ENCODE measurements at regions of chr2 and their contacts with region 1.

Region 1: DNA sequence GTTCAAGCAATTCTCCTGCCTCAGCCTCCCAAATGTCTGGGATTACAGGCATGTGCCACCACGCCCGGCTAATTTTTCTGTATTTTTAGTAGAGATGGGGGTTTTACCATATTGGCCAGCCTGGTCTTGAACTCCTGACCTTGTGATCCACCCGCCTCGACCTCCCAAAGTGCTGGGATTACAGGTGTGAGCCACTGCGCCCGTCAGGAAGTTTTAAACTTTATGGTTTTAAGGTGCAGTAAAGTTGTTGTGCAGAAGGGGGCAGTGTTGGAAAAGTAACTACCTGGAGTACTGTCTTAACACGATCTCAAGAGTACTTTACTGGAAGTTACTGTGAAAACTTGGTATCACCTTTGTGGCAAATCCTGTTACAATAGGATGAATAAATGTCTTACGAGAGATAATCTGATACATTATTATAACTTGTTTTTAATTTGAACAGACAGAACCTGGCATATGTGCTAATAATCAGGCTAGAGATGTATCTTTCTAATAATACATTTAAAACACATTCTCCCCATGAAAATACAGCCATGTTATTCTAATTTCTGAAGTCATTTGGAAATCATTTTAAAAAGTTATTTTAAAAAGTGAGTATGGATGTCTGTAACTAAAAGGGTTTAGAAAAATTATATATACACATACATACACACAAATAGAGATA is 10.8 kb downstream of the SPDYA start:
- DNase-seq: peak; percentile 65
- ATAC-seq: peak; percentile 97
- H3K4me3 ChIP-seq: no peak overlapping the region
- H3K27ac ChIP-seq: no peak overlapping the region
- H3K4me1 ChIP-seq: no peaks in the 10 kb centered on the region
- H3K27me3 ChIP-seq: no peaks in the 10 kb centered on the region
- CTCF ChIP-seq: peak; percentile 67
- POLR2A ChIP-seq: no peak
- RAD21 ChIP-seq: peak; percentile 75

Region 2: DNA sequence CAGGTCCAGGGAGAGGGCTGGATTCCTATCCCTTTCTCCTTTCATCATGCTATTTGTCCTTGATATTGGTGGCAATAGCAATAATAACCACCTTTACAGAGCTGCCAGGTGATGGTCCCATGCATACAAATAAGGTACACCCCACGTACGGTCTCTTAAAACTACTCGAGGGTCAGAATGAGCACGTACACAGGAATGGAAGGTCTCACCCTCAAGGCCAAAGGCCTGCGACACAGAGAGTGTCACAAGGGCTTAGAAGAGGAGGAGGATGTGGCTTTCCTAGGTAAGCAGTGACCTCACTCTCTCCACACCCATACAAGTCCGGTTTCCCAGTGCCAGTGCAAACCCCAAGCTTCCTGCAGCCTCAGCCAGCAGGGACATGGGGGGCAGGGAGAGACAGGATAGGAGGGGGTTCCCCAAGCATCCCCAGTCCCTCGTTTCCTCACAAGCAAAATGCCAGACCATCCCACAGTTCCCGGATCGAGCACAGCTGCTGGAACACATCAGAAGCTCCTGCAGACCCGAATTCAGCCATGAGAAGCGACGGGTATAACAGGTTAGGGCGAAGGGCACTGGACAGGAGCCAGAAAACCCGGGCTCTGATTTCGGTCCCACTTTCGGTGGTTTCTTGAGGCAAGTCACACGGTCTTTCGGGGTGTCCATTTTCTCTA is 276.4 kb before region 1 on chr2:
- CTCF ChIA-PET with region 1: no interaction called
- POLR2A ChIA-PET with region 1: no interaction called
- dilution Hi-C with region 1: no loop called
- in situ Hi-C with region 1: no loop called
- intact Hi-C with region 1: no loop called
- DNase-seq: peak; percentile 15
- ATAC-seq: no peak
- H3K4me3 ChIP-seq: no peak overlapping the region
- H3K27ac ChIP-seq: no peak overlapping the region
- H3K4me1 ChIP-seq: no peaks in the 10 kb centered on the region
- H3K27me3 ChIP-seq: peaks cover 35% of the 10 kb centered on the region
- CTCF ChIP-seq: no peak
- POLR2A ChIP-seq: no peak
- RAD21 ChIP-seq: no peak

Region 3: DNA sequence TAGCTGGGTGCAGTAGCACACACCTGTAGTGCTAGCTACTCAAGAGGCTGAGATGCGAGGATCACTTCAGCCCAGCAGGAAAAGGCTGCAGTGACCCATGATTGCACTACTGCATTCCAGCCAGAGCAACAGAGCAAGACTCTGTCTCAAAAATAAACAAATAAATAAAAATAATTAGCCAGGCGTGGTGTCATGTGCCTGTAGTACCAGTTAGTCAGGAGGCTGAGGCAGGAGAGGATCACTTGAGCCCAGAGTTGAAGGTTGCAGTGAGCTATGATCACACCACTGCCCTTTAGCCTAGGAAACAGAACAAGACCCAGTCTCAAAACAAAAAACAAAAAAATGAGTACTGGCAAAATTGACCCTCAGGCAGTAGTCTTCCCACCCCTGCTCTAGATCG is 131.7 kb before region 1 on chr2:
- CTCF ChIA-PET with region 1: no interaction called
- POLR2A ChIA-PET with region 1: no interaction called
- dilution Hi-C with region 1: no loop called
- in situ Hi-C with region 1: no loop called
- intact Hi-C with region 1: no loop called
- DNase-seq: no peak
- ATAC-seq: no peak
- H3K4me3 ChIP-seq: no peak overlapping the region
- H3K27ac ChIP-seq: no peak overlapping the region
- H3K4me1 ChIP-seq: peaks cover 9% of the 10 kb centered on the region
- H3K27me3 ChIP-seq: no peaks in the 10 kb centered on the region
- CTCF ChIP-seq: no peak
- POLR2A ChIP-seq: no peak
- RAD21 ChIP-seq: no peak

Region 4: GRCh38 chr2:28927878-28928277 is 106.5 kb after region 1 on chr2:
- CTCF ChIA-PET with region 1: no interaction called
- POLR2A ChIA-PET with region 1: no interaction called
- dilution Hi-C with region 1: no loop called
- in situ Hi-C with region 1: no loop called
- intact Hi-C with region 1: loop called (anchors 5 kb)
- DNase-seq: peak; percentile 76
- ATAC-seq: peak; percentile 88
- H3K4me3 ChIP-seq: no peak overlapping the region
- H3K27ac ChIP-seq: peak overlapping the region; percentile 64; the same call in 1 of the 2 replicates
- H3K4me1 ChIP-seq: peaks cover 12% of the 10 kb centered on the region
- H3K27me3 ChIP-seq: no peaks in the 10 kb centered on the region
- CTCF ChIP-seq: no peak
- POLR2A ChIP-seq: no peak
- RAD21 ChIP-seq: no peak

Region 5: DNA sequence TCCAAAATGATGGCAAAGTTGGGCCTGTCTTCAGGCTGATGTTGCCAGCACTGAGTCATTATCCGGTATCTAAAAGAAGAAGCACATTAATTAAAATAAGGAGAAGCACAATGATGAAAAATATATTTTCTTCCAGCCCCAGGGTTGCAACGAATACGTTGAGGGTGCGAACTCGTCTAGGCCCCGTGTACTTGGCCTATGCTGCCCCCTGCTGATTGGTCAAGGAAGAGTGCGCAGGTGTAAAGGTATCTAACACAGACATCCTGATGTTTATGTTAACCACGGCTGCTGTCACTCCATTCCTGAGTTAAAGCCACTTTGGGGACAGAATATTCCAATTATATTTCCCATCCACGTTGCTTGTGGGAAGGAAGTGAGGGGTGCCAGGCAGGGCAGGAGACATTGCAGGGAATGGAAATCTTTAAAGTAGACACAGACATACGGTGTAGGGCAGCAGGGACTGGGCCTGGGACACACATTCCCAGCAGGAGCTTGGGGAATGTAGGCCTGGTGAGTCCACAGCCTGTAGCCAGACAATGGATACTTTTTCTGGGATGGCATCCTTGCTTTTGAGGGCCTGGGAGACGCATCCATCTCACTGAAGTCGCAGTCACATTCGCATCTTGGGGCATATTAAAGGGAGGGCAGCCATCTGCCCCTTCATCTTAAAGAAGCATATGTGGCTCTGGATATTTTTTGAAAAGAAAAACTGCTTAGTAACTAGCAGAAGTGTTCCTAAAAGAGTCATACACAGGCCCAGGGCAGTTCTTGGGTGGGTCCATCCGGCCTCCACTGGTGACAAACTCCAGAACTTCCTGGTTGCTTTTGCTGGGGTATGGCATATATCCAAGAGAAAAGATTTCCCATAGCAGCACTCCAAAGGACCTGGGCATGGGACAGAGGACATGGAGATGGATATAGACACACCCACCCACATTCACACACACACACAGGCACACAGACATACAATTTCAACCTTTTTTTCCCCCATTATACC is 375.7 kb after region 1 on chr2:
- CTCF ChIA-PET with region 1: no interaction called
- POLR2A ChIA-PET with region 1: no interaction called
- dilution Hi-C with region 1: no loop called
- in situ Hi-C with region 1: no loop called
- intact Hi-C with region 1: loop called (anchors 5 kb)
- DNase-seq: peak; percentile 47
- ATAC-seq: peak; percentile 80
- H3K4me3 ChIP-seq: no peak overlapping the region
- H3K27ac ChIP-seq: no peak overlapping the region
- H3K4me1 ChIP-seq: peaks cover 3% of the 10 kb centered on the region; the same call in 1 of the 2 replicates
- H3K27me3 ChIP-seq: no peaks in the 10 kb centered on the region
- CTCF ChIP-seq: peak; percentile 73
- POLR2A ChIP-seq: no peak
- RAD21 ChIP-seq: peak; percentile 93

Region 6: DNA sequence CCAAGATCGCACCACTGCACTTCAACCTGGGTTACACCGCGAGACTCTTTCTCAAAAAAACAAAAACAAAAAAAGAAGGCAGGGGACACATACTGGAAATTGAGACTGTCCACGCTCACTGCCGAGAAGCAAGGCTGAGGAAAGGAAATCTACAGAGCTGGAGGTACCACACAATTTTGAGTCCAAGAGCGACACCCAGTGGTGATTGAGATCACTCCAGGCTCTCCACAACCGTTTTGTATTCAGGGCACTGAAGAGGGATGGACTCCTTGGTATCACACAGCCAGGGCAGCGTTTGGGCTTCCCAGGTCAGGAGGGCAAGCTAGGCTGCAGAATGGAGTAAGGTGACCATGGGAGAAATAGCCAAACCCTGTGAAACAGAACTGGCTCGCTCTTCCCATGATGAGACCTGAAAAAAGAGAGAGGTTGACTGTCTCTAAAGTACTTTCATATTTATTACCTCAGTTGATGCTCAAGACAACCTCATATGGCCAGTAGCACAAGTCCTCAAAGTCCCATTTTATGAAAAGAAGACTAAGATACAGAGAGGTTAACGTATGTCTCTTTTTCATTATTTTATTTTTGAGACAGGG is 1250.9 kb after region 1 on chr2:
- CTCF ChIA-PET with region 1: no interaction called
- POLR2A ChIA-PET with region 1: no interaction called
- dilution Hi-C with region 1: no loop called
- in situ Hi-C with region 1: no loop called
- intact Hi-C with region 1: loop called (anchors 2 kb)
- DNase-seq: peak; percentile 72
- ATAC-seq: peak; percentile 96
- H3K4me3 ChIP-seq: no peak overlapping the region
- H3K27ac ChIP-seq: no peak overlapping the region
- H3K4me1 ChIP-seq: no peaks in the 10 kb centered on the region
- H3K27me3 ChIP-seq: peaks cover 21% of the 10 kb centered on the region
- CTCF ChIP-seq: peak; percentile 78
- POLR2A ChIP-seq: no peak
- RAD21 ChIP-seq: peak; percentile 77

Region 7: DNA sequence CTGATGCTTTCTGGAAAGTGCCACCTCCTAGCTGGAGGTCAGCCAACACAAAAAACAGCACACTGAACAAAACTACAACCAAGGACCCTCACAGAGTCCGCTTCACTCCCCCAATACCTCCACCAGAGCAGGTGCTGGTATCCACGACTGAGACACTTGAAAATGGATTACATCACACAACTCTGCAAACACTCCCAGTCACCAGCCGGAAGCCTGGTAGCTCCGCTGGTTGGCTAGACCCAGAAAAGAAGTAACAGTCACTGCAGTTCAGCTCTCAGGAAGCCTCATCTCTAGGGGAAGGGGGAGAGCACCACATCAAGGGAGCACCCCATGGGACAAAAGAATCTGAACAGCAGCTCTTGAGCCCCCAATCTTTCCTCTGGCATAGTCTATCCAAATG is 1801.0 kb after region 1 on chr2:
- CTCF ChIA-PET with region 1: no interaction called
- POLR2A ChIA-PET with region 1: no interaction called
- dilution Hi-C with region 1: no loop called
- in situ Hi-C with region 1: no loop called
- intact Hi-C with region 1: no loop called
- DNase-seq: no peak
- ATAC-seq: no peak
- H3K4me3 ChIP-seq: no peak overlapping the region
- H3K27ac ChIP-seq: no peak overlapping the region
- H3K4me1 ChIP-seq: no peaks in the 10 kb centered on the region
- H3K27me3 ChIP-seq: no peaks in the 10 kb centered on the region
- CTCF ChIP-seq: no peak
- POLR2A ChIP-seq: no peak
- RAD21 ChIP-seq: no peak